ENCODE measurements at regions of chr1 and their contacts with region 1.

Region 1: GRCh38 chr1:1122078-1122811 is 6.4 kb upstream of the C1orf159 start:
- DNase-seq: peak; percentile 90
- ATAC-seq: peak; percentile 97
- H3K4me3 ChIP-seq: peak overlapping the region in 4 of 5 experiments; percentile 28 to 52 (median 44)
- H3K4me3 Mint-ChIP-seq: peak overlapping the region; percentile 47
- H3K27ac ChIP-seq: peak overlapping the region; percentile 29 to 37
- H3K27ac Mint-ChIP-seq: no peak overlapping the region
- H3K4me1 ChIP-seq: peaks cover 29 to 31% of the 10 kb centered on the region in 2 donors
- H3K4me1 Mint-ChIP-seq: peaks cover 19% of the 10 kb centered on the region
- H3K27me3 ChIP-seq: peaks cover 0 to 30% (median 3%) of the 10 kb centered on the region in 4 experiments
- H3K27me3 Mint-ChIP-seq: peaks cover 9% of the 10 kb centered on the region
- CTCF ChIP-seq: peak; percentile 96

Region 2: GRCh38 chr1:970242-970972 is 151.8 kb before region 1 on chr1:
- CTCF ChIA-PET with region 1: no interaction called
- POLR2A ChIA-PET with region 1: no interaction called
- intact Hi-C with region 1: no loop called
- DNase-seq: no peak
- ATAC-seq: no peak
- H3K4me3 ChIP-seq: no peak overlapping the region
- H3K4me3 Mint-ChIP-seq: no peak overlapping the region
- H3K27ac ChIP-seq: no peak overlapping the region
- H3K27ac Mint-ChIP-seq: no peak overlapping the region
- H3K4me1 ChIP-seq: peaks cover 13 to 16% of the 10 kb centered on the region in 2 donors
- H3K4me1 Mint-ChIP-seq: peaks cover 4% of the 10 kb centered on the region
- H3K27me3 ChIP-seq: peaks cover 0 to 69% (median 18%) of the 10 kb centered on the region in 4 experiments
- H3K27me3 Mint-ChIP-seq: peaks cover 24% of the 10 kb centered on the region
- CTCF ChIP-seq: no peak

Region 3: DNA sequence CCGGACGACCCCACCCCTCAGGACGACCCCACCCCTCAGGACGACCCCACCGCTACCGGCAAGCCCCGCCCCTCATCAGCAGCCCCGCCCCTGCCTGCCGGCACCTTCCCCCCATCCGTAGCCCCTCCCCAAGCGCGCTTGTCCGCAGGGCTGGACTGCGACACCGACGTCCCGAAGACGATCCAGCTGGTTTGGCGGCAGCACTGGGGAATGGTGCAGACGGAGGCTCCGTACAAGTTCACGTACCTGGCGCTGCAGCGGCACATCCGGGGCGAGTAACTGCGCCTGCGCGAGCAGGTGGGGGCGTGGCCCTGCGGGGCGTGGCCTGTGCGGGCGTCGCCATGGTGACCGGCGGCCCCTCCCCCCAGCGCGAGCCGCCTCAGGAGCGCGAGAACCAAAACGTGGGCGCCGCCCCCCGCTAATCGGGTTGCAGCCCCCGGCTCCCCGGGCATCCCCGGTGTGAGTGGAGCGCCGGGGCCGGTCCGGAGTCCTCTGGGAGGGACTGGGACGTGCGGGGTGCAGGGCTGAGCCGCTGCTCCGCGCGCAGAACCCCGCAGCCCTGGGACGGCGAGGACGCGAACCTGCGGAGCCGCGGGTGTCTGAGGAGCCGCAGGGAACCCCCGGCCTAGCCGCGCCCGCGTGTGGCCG is 53.1 kb before region 1 on chr1:
- CTCF ChIA-PET with region 1: no interaction called
- POLR2A ChIA-PET with region 1: no interaction called
- intact Hi-C with region 1: no loop called
- DNase-seq: peak; percentile 96
- ATAC-seq: peak; percentile 50
- H3K4me3 ChIP-seq: peak overlapping the region in 4 of 5 experiments; percentile 56 to 71 (median 67)
- H3K4me3 Mint-ChIP-seq: peak overlapping the region; percentile 86
- H3K27ac ChIP-seq: peak overlapping the region; percentile 73 to 77
- H3K27ac Mint-ChIP-seq: peak overlapping the region; percentile 92
- H3K4me1 ChIP-seq: peaks cover 28 to 31% of the 10 kb centered on the region in 2 donors
- H3K4me1 Mint-ChIP-seq: peaks cover 25% of the 10 kb centered on the region
- H3K27me3 ChIP-seq: peaks cover 0 to 11% (median 2%) of the 10 kb centered on the region in 4 experiments
- H3K27me3 Mint-ChIP-seq: no peaks in the 10 kb centered on the region
- CTCF ChIP-seq: no peak

Region 4: DNA sequence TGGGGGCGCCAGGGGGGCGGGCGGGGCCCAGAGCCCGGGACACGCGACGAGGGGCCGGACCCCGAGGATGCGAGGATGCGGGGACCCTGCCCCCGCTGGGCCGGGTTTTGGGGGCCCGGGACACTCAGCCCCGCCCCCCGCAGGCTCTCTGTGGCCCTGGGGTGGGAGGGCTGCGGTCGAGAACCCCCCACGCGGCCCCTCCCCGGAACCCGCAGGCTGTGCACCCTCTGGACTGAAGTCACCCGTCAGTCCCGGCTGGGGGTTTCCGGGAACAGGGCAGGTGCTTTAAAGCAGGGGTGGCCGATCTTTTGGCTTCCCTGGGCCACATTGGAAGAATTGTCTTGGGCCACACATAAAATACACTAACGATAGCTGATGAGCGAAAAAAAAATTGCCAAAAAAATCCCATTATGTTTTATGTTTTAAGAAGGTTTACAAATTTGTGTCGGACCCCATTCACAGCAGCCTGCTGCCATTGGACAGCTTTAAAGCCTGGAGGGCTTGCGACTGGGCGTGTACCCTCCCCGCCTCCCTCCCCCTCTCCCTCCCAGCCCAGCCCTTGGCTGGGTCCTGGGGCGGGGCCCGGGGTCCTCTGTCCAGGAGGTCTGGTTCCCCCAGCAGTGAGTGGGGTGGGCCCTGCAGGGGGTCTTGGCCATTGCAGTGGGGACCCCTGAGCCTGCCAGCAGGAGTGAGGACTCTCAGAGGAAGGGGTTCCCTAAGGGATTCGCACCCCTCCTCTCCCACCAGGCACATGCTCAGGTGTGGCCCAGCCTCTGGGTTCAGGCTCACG is 15.2 kb after region 1 on chr1:
- CTCF ChIA-PET with region 1: interaction called, 34 read pairs
- POLR2A ChIA-PET with region 1: interaction called, 27 read pairs
- intact Hi-C with region 1: loop called (anchors 1 kb)
- DNase-seq: peak; percentile 94
- ATAC-seq: peak; percentile 73
- H3K4me3 ChIP-seq: peak overlapping the region in 4 of 5 experiments; percentile 44 to 60 (median 54)
- H3K4me3 Mint-ChIP-seq: peak overlapping the region; percentile 82
- H3K27ac ChIP-seq: peak overlapping the region; percentile 92 to 94
- H3K27ac Mint-ChIP-seq: peak overlapping the region; percentile 92
- H3K4me1 ChIP-seq: peaks cover 32 to 56% of the 10 kb centered on the region in 2 donors
- H3K4me1 Mint-ChIP-seq: peaks cover 37% of the 10 kb centered on the region
- H3K27me3 ChIP-seq: no peaks in the 10 kb centered on the region
- H3K27me3 Mint-ChIP-seq: no peaks in the 10 kb centered on the region
- CTCF ChIP-seq: no peak

Region 5: GRCh38 chr1:1173793-1174415 is 51.7 kb after region 1 on chr1 and contains the start of gene TTLL10:
- CTCF ChIA-PET with region 1: interaction called, 31 read pairs
- POLR2A ChIA-PET with region 1: interaction called, 8 read pairs
- intact Hi-C with region 1: loop called (anchors 5 kb)
- DNase-seq: peak; percentile 84
- ATAC-seq: peak; percentile 31
- H3K4me3 ChIP-seq: peak within 1 kb of the TSS in 2 of 5 experiments; percentile 15 to 22
- H3K4me3 Mint-ChIP-seq: peak within 1 kb of the TSS; percentile 55
- H3K27ac ChIP-seq: no peak within 1 kb of the TSS
- H3K27ac Mint-ChIP-seq: peak within 1 kb of the TSS; percentile 50
- H3K4me1 ChIP-seq: peaks cover 57 to 70% of the 10 kb centered on the region in 2 donors
- H3K4me1 Mint-ChIP-seq: peaks cover 52% of the 10 kb centered on the region
- H3K27me3 ChIP-seq: peaks cover 0 to 44% (median 21%) of the 10 kb centered on the region in 4 experiments
- H3K27me3 Mint-ChIP-seq: peaks cover 12% of the 10 kb centered on the region
- CTCF ChIP-seq: no peak
- total RNA-seq, gene TTLL10: 0.37 and 0.61 TPM in 2 replicates

Region 6: DNA sequence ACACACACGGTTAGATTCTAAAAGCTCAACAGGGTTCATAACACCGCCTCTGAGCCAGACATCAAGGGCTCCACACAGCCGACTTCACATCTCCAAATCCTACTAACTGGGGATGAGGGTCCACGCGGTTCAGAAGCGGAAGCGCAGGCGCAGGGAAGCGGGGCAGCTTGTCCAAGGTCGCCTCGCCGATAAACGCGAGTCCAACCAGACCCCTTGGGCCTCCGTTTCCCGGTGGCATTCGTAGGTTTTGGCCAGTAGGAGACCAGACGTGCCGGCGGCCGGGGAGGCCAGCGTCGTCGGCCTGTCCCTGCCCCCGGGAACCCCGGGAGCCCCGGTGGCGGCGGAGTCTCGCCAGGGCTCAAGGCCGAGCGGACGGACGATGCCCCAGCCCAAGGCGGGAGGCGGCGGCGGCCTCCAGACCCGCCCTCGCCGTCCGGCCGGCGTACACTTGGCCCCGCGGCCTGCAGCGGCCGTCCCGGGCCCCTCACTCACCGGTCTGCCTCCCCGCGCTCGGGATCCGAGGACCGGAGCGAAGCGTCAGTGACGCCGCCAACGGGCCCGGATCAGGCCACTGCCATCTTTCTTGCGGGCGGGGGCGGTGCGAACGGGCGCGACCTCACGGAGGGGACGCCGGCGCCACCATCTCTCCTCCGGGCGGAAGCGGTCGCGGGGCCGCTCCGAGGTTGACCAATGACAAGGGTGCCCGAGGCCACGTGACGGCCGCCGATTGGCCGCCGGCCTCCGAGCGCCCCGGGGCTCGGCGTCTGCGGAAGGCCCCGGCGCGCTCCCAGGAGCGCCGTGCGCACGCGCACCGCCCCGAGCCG is 109.4 kb after region 1 on chr1 and contains the start of gene SDF4:
- CTCF ChIA-PET with region 1: interaction called, 19 read pairs
- POLR2A ChIA-PET with region 1: interaction called, 3 read pairs
- intact Hi-C with region 1: no loop called
- DNase-seq: peak; percentile 98
- ATAC-seq: peak; percentile 94
- H3K4me3 ChIP-seq: peak within 1 kb of the TSS; percentile 86 to 98 (median 90)
- H3K4me3 Mint-ChIP-seq: peak within 1 kb of the TSS; percentile 93
- H3K27ac ChIP-seq: peak within 1 kb of the TSS; percentile 29 to 91
- H3K27ac Mint-ChIP-seq: peak within 1 kb of the TSS; percentile 84
- H3K4me1 ChIP-seq: peaks cover 25 to 30% of the 10 kb centered on the region in 2 donors
- H3K4me1 Mint-ChIP-seq: peaks cover 33% of the 10 kb centered on the region
- H3K27me3 ChIP-seq: no peaks in the 10 kb centered on the region
- H3K27me3 Mint-ChIP-seq: no peaks in the 10 kb centered on the region
- CTCF ChIP-seq: no peak
- total RNA-seq, gene SDF4: 143 and 151 TPM in 2 replicates

Region 7: DNA sequence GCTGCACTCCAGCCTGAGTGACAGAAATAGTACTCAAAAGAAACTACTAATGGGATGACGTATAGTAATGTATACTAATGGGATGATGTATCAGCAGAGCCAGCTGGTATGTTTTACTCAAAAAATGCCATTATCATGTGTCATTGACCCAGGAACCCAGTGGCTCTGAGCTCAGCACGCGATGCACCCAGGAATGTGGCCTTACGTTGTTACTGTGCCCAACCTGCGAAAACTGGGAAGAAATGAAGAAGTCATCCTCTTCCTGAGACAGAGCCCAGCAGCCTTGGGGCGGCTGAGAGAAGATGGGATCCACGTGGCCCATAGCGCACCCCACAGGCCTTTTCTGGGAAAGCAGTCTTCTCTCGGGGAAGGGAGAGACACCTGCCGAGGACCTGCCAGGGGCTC is 142.6 kb after region 1 on chr1:
- CTCF ChIA-PET with region 1: interaction called, 26 read pairs
- POLR2A ChIA-PET with region 1: no interaction called
- intact Hi-C with region 1: no loop called
- DNase-seq: no peak
- ATAC-seq: no peak
- H3K4me3 ChIP-seq: no peak overlapping the region
- H3K4me3 Mint-ChIP-seq: no peak overlapping the region
- H3K27ac ChIP-seq: no peak overlapping the region
- H3K27ac Mint-ChIP-seq: no peak overlapping the region
- H3K4me1 ChIP-seq: peaks cover 0 to 4% of the 10 kb centered on the region in 2 donors
- H3K4me1 Mint-ChIP-seq: peaks cover 18% of the 10 kb centered on the region
- H3K27me3 ChIP-seq: no peaks in the 10 kb centered on the region
- H3K27me3 Mint-ChIP-seq: no peaks in the 10 kb centered on the region
- CTCF ChIP-seq: peak; percentile 18

Measured in B cell (primary cell).